ENCODE measurements at regions of chr5 and their contacts with region 1.

Region 1: GRCh38 chr5:173331956-173332479 is 3.8 kb upstream of the STC2 start:
- DNase-seq: peak; percentile 83
- ATAC-seq: peak; percentile 11
- H3K4me3 ChIP-seq: no peak overlapping the region
- H3K27ac ChIP-seq: no peak overlapping the region
- H3K4me1 ChIP-seq: peaks cover 9% of the 10 kb centered on the region
- H3K27me3 ChIP-seq: no peaks in the 10 kb centered on the region
- CTCF ChIP-seq: peak; percentile 86
- POLR2A ChIP-seq: no peak
- RAD21 ChIP-seq: peak; percentile 91

Region 2: DNA sequence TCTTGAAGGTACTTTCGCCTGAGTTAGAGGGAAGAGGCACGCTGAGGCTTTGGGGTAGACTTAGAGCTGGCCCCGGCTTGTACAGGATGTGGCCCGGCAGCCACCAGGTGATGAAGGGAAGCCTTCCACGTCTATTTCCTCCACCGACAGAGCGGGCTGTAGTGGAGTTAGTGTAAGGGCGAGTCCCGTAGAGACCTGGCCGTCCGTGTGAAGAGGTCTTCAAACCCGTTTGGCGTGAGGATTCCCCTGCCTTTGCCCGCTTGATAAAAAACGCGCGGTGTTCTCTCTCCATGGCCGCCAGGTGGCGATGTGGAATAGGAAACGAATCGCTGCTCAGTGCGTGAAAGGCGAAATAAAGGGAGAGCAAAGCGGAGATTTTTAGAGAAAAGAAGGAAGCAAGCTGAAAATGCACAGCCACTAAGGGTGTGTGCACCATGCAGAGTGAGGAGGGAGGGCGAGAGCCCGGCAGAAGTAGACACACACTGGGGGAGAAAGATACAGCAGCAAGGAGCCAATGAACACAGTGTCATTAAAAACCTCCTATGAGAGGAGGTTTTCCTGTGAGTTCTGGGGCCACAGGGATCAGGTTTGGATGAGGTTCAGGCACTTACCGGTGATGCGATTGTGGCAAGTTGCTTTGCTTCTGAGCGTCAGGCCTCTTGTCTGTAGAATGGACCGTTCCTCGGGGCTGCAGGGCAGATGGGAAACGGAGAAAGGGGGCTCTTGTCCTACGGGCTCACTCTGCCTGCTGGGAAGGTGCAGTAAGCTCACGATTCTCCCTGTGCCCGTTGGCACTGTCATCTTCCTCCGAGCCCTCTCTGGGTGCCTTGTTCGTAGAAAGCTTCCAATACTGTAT is 38.0 kb before region 1 on chr5:
- CTCF ChIA-PET with region 1: interaction called, 40 read pairs
- POLR2A ChIA-PET with region 1: interaction called, 8 read pairs
- dilution Hi-C with region 1: no loop called
- in situ Hi-C with region 1: no loop called
- intact Hi-C with region 1: loop called (anchors 1 kb)
- DNase-seq: peak; percentile 80
- ATAC-seq: peak; percentile 84
- H3K4me3 ChIP-seq: no peak overlapping the region
- H3K27ac ChIP-seq: peak overlapping the region; percentile 29
- H3K4me1 ChIP-seq: peaks cover 17% of the 10 kb centered on the region
- H3K27me3 ChIP-seq: no peaks in the 10 kb centered on the region; the same call in 1 of the 2 replicates
- CTCF ChIP-seq: peak; percentile 96
- POLR2A ChIP-seq: peak; percentile 55; the same call in 1 of the 2 replicates
- RAD21 ChIP-seq: peak; percentile 96

Region 3: GRCh38 chr5:173396311-173396993 is 64.4 kb after region 1 on chr5:
- CTCF ChIA-PET with region 1: no interaction called
- POLR2A ChIA-PET with region 1: no interaction called
- dilution Hi-C with region 1: no loop called
- in situ Hi-C with region 1: no loop called
- intact Hi-C with region 1: loop called (anchors 5 kb)
- DNase-seq: no peak
- ATAC-seq: no peak
- H3K4me3 ChIP-seq: no peak overlapping the region
- H3K27ac ChIP-seq: 0 out of 2 replicates have a peak overlapping the region, but pooled peaks have one; percentile 7
- H3K4me1 ChIP-seq: peaks cover 13% of the 10 kb centered on the region
- H3K27me3 ChIP-seq: no peaks in the 10 kb centered on the region
- CTCF ChIP-seq: no peak
- POLR2A ChIP-seq: no peak
- RAD21 ChIP-seq: no peak

Region 4: GRCh38 chr5:173451031-173451430 is 119.0 kb after region 1 on chr5:
- CTCF ChIA-PET with region 1: no interaction called
- POLR2A ChIA-PET with region 1: no interaction called
- dilution Hi-C with region 1: no loop called
- in situ Hi-C with region 1: no loop called
- intact Hi-C with region 1: loop called (anchors 1 kb)
- DNase-seq: peak; percentile 28
- ATAC-seq: no peak
- H3K4me3 ChIP-seq: no peak overlapping the region
- H3K27ac ChIP-seq: peak overlapping the region; percentile 69
- H3K4me1 ChIP-seq: peaks cover 30% of the 10 kb centered on the region
- H3K27me3 ChIP-seq: no peaks in the 10 kb centered on the region
- CTCF ChIP-seq: peak; percentile 27; the same call in 1 of the 2 replicates
- POLR2A ChIP-seq: no peak
- RAD21 ChIP-seq: no peak; the same call in 1 of the 2 replicates

Region 5: GRCh38 chr5:173472141-173472543 is 140.1 kb after region 1 on chr5:
- CTCF ChIA-PET with region 1: no interaction called
- POLR2A ChIA-PET with region 1: interaction called, 4 read pairs
- dilution Hi-C with region 1: no loop called
- in situ Hi-C with region 1: no loop called
- intact Hi-C with region 1: loop called (anchors 1 kb)
- DNase-seq: peak; percentile 99
- ATAC-seq: peak; percentile 60
- H3K4me3 ChIP-seq: no peak overlapping the region
- H3K27ac ChIP-seq: peak overlapping the region; percentile 51; the same call in 1 of the 2 replicates
- H3K4me1 ChIP-seq: peaks cover 35% of the 10 kb centered on the region
- H3K27me3 ChIP-seq: no peaks in the 10 kb centered on the region
- CTCF ChIP-seq: no peak
- POLR2A ChIP-seq: no peak
- RAD21 ChIP-seq: peak; percentile 27; the same call in 1 of the 2 replicates

Region 6: DNA sequence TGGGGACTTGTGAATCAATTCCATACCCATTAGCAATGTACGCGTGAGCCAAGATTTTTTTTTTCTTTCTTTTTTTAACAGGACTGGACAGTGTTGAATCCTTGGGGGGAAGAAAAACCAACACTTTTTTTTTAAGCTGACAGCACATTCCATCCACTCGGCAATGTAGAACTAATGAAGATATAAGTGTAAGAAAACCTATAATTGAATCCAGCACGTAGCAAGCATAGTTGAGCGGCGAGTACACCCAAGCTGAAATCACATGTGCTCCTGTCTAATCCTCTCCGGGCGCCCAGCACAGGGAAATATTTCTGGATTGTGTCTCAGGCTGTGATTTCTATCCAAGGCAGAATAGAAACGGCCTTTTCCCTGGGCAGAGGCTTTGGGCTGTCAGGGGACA is 166.3 kb after region 1 on chr5:
- CTCF ChIA-PET with region 1: no interaction called
- POLR2A ChIA-PET with region 1: interaction called, 6 read pairs
- dilution Hi-C with region 1: no loop called
- in situ Hi-C with region 1: no loop called
- intact Hi-C with region 1: loop called (anchors 1 kb)
- DNase-seq: peak; percentile 64
- ATAC-seq: peak; percentile 53
- H3K4me3 ChIP-seq: no peak overlapping the region
- H3K27ac ChIP-seq: peak overlapping the region; percentile 42; the same call in 1 of the 2 replicates
- H3K4me1 ChIP-seq: peaks cover 26% of the 10 kb centered on the region
- H3K27me3 ChIP-seq: no peaks in the 10 kb centered on the region
- CTCF ChIP-seq: no peak
- POLR2A ChIP-seq: no peak
- RAD21 ChIP-seq: no peak

Region 7: DNA sequence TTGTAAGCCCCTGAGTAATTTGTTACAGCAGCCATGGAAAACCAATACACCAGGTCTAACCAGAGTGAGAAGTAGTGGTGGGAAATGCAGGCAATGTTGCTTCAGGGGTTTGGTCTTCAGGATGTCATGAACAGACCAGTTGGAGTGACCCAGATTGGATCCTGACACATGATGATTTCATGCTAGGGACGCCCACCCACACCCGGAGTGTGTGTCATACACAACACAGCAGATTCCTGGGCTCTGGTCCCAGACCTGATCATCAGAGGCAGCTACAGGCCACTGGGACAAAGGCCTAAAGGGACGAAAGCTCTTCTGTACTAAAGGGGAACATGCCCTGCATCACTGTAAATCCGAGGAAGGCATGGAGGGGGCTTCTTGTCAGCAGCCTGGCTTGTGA is 907.7 kb after region 1 on chr5:
- CTCF ChIA-PET with region 1: no interaction called
- POLR2A ChIA-PET with region 1: no interaction called
- dilution Hi-C with region 1: no loop called
- in situ Hi-C with region 1: no loop called
- intact Hi-C with region 1: no loop called
- DNase-seq: no peak
- ATAC-seq: no peak
- H3K4me3 ChIP-seq: no peak overlapping the region
- H3K27ac ChIP-seq: no peak overlapping the region
- H3K4me1 ChIP-seq: no peaks in the 10 kb centered on the region
- H3K27me3 ChIP-seq: no peaks in the 10 kb centered on the region
- CTCF ChIP-seq: no peak
- POLR2A ChIP-seq: no peak
- RAD21 ChIP-seq: no peak